MCF 10A (cell line): ENCODE measurements at regions of chr15 and their contacts with region 1.

Region 1: GRCh38 chr15:70474471-70475396 is 288.6 kb downstream of the UACA start:
- DNase-seq: peak; percentile 98
- H3K4me3 Mint-ChIP-seq: peak overlapping the region; percentile 58
- H3K27ac Mint-ChIP-seq: peak overlapping the region; percentile 91
- H3K4me1 Mint-ChIP-seq: peaks cover 17% of the 10 kb centered on the region
- H3K27me3 Mint-ChIP-seq: peaks cover 14% of the 10 kb centered on the region
- CTCF ChIP-seq: no peak

Region 2: DNA sequence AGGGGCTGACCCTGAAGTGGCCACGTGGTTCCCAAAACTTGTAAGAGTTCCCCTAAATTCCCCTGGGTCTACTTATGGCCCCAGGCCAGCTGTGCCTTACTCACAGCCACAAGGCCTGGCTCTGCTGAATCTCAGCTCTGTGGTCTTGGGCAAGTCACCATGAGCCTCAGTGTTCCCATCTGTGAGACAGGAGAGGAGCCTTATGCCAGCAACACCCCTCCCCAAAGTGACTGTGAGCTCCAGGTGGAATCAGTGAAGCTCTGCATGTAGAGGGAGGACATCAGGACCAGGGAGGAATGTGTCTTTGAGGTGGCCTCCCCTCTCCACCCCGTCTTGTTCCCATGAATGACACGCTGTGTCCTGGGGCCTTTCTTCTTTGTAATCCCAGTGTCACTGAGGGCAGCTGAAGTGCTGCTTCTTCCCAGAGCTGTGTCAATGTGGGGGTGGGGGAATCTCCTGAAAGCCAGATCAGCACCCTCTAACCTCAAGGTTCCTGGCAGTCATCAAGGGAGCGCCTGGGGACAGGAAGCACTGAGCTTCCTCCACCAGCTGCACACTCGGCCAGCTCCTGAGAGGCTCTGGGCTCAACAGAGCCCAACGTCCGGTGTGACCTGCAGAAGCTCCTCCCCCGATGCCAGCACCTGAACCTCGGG is 29.7 kb after region 1 on chr15:
- CTCF ChIA-PET with region 1: interaction called, 4 read pairs
- POLR2A ChIA-PET with region 1: interaction called, 10 read pairs
- intact Hi-C with region 1: loop called (anchors 1 kb)
- DNase-seq: peak; percentile 78
- H3K4me3 Mint-ChIP-seq: no peak overlapping the region
- H3K27ac Mint-ChIP-seq: no peak overlapping the region
- H3K4me1 Mint-ChIP-seq: peaks cover 46% of the 10 kb centered on the region
- H3K27me3 Mint-ChIP-seq: no peaks in the 10 kb centered on the region
- CTCF ChIP-seq: no peak